IMR-90 (cell line): ENCODE measurements at regions of chr11 and their contacts with region 1.

Region 1: GRCh38 chr11:104968355-104968855 is at the start of gene CASP4:
- DNase-seq: peak; percentile 78
- ATAC-seq: peak; percentile 65
- H3K4me3 ChIP-seq: peak within 1 kb of the TSS; percentile 87
- H3K27ac ChIP-seq: peak within 1 kb of the TSS; percentile 99
- H3K4me1 ChIP-seq: peaks cover 10% of the 10 kb centered on the region; the same call in 1 of the 2 replicates
- H3K27me3 ChIP-seq: no peaks in the 10 kb centered on the region
- CTCF ChIP-seq: no peak
- POLR2A ChIP-seq: peak; percentile 51; the same call in 1 of the 2 replicates
- RAD21 ChIP-seq: no peak
- total RNA-seq, gene CASP4: 89.4 and 91.9 TPM in 2 replicates

Region 2: GRCh38 chr11:104609311-104610085 is 358.9 kb before region 1 on chr11:
- CTCF ChIA-PET with region 1: no interaction called
- POLR2A ChIA-PET with region 1: no interaction called
- dilution Hi-C with region 1: no loop called
- in situ Hi-C with region 1: no loop called
- intact Hi-C with region 1: loop called (anchors 10 kb)
- DNase-seq: peak; percentile 75
- ATAC-seq: peak; percentile 94
- H3K4me3 ChIP-seq: no peak overlapping the region
- H3K27ac ChIP-seq: no peak overlapping the region
- H3K4me1 ChIP-seq: no peaks in the 10 kb centered on the region
- H3K27me3 ChIP-seq: no peaks in the 10 kb centered on the region
- CTCF ChIP-seq: peak; percentile 70
- POLR2A ChIP-seq: no peak
- RAD21 ChIP-seq: peak; percentile 78

Region 3: DNA sequence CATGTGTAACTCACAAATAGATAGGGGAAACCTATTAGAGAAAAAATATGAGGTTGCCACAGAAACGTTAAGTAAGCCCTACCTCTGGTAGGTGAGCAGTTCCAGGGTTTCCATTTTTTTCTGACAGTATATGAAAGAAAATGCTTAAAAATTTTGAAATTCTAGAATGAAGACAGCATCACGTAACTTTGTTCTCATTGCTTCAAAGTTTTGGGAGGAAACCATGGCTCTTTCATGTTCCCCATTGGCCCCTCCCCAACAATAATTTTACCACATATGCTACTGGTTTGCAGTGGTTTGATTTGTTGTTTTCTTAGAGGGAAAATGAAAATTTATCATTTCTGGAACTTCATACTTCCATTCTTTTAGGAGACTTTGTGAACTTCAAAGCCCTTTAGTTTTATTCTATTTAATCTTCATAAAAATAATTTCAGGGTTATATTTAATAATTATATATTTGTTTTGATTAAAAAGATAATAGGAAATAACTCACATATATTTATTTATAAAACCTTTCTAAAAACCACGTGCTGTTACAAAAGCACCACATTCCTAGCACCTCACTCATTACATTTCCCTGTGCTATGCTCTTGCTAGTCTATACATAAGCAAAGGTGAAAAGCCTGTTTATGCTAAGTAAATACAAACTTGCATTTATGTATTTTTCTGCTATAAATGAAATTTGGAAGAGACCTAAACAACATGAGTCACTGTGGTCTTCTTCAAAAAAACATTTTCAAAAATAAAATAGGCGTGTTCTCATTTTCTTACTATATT is 183.5 kb before region 1 on chr11:
- CTCF ChIA-PET with region 1: no interaction called
- POLR2A ChIA-PET with region 1: no interaction called
- dilution Hi-C with region 1: no loop called
- in situ Hi-C with region 1: no loop called
- intact Hi-C with region 1: no loop called
- DNase-seq: peak; percentile 23
- ATAC-seq: no peak
- H3K4me3 ChIP-seq: no peak overlapping the region
- H3K27ac ChIP-seq: no peak overlapping the region
- H3K4me1 ChIP-seq: no peaks in the 10 kb centered on the region
- H3K27me3 ChIP-seq: no peaks in the 10 kb centered on the region
- CTCF ChIP-seq: no peak
- POLR2A ChIP-seq: no peak
- RAD21 ChIP-seq: no peak

Region 4: DNA sequence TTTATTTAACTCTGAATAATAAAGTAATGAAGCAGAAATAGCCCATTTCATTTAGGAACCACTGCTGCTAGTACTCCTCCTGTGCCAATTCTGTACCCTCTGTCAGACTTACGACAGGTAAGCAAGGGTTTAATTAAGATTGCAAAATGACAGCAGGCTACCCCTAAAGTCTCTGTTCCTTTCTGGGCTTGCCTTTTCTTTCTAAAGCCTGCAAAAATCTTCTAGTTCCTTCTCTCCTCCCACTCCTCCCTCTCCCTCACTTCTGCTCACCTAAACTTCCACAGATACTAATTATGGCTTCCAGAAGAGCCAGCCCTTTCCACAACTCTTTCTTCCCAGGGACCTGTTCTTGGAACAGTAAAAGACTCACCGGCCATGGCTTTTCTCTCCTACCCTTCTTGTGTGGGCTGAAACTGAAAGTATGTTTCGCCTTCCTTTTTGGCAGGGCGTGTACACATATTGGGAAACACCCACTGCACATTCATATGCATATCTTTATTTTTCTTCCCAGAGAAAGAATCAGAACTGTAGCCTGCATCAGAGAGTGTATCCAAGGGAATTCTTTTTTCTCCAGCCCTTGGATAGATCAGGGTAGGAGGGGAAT is 76.6 kb after region 1 on chr11 and contains the start of gene CARD16:
- CTCF ChIA-PET with region 1: no interaction called
- POLR2A ChIA-PET with region 1: no interaction called
- dilution Hi-C with region 1: no loop called
- in situ Hi-C with region 1: no loop called
- intact Hi-C with region 1: loop called (anchors 2 kb)
- DNase-seq: peak; percentile 81
- ATAC-seq: peak; percentile 37
- H3K4me3 ChIP-seq: peak within 1 kb of the TSS; percentile 82
- H3K27ac ChIP-seq: peak within 1 kb of the TSS; percentile 96
- H3K4me1 ChIP-seq: peaks cover 9% of the 10 kb centered on the region
- H3K27me3 ChIP-seq: no peaks in the 10 kb centered on the region
- CTCF ChIP-seq: no peak
- POLR2A ChIP-seq: no peak
- RAD21 ChIP-seq: no peak
- total RNA-seq, gene CARD16: 7.9 and 23.3 TPM in 2 replicates

Region 5: DNA sequence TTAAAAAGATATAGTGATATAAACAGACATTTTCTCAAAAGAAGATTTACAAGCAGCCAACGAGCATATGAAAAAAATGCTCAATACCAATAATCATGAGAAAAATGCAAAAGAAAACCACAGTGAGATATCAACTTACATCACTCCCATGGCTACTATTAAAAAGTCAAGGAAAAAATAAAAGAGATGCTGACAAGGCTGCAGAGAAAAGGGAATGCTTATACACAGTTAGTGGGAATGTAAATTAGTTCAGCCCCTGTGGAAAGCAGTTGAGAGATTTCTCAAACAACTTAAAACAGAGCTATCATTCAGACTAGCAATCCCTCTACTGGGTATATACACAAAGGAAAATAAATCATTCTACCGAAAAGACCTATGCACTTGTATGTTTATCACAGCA is 268.3 kb after region 1 on chr11:
- CTCF ChIA-PET with region 1: no interaction called
- POLR2A ChIA-PET with region 1: no interaction called
- dilution Hi-C with region 1: no loop called
- in situ Hi-C with region 1: no loop called
- intact Hi-C with region 1: loop called (anchors 2 kb)
- DNase-seq: peak; percentile 84
- ATAC-seq: peak; percentile 90
- H3K4me3 ChIP-seq: no peak overlapping the region
- H3K27ac ChIP-seq: no peak overlapping the region
- H3K4me1 ChIP-seq: peaks cover 4% of the 10 kb centered on the region; the same call in 1 of the 2 replicates
- H3K27me3 ChIP-seq: no peaks in the 10 kb centered on the region
- CTCF ChIP-seq: no peak
- POLR2A ChIP-seq: no peak
- RAD21 ChIP-seq: no peak

Region 6: GRCh38 chr11:105609832-105610781 is 641.7 kb after region 1 on chr11 and contains the start of gene GRIA4:
- CTCF ChIA-PET with region 1: no interaction called
- POLR2A ChIA-PET with region 1: no interaction called
- dilution Hi-C with region 1: no loop called
- in situ Hi-C with region 1: no loop called
- intact Hi-C with region 1: loop called (anchors 2 kb)
- DNase-seq: peak; percentile 74
- ATAC-seq: peak; percentile 89
- H3K4me3 ChIP-seq: peak within 1 kb of the TSS; percentile 53
- H3K27ac ChIP-seq: peak within 1 kb of the TSS; percentile 10; the same call in 1 of the 2 replicates
- H3K4me1 ChIP-seq: no peaks in the 10 kb centered on the region
- H3K27me3 ChIP-seq: no peaks in the 10 kb centered on the region
- CTCF ChIP-seq: no peak
- POLR2A ChIP-seq: no peak
- RAD21 ChIP-seq: 0 out of 2 replicates have a peak, but pooled peaks have one; percentile 7
- total RNA-seq, gene GRIA4: 0.36 and 0.56 TPM in 2 replicates

Region 7: GRCh38 chr11:106076919-106077608 is 1108.7 kb after region 1 on chr11 and contains the start of gene KBTBD3:
- CTCF ChIA-PET with region 1: no interaction called
- POLR2A ChIA-PET with region 1: no interaction called
- dilution Hi-C with region 1: no loop called
- in situ Hi-C with region 1: no loop called
- intact Hi-C with region 1: loop called (anchors 5 kb)
- DNase-seq: peak; percentile 99
- ATAC-seq: peak; percentile 96
- H3K4me3 ChIP-seq: peak within 1 kb of the TSS; percentile 91
- H3K27ac ChIP-seq: peak within 1 kb of the TSS; percentile 97
- H3K4me1 ChIP-seq: no peaks in the 10 kb centered on the region; the same call in 1 of the 2 replicates
- H3K27me3 ChIP-seq: no peaks in the 10 kb centered on the region
- CTCF ChIP-seq: no peak; the same call in 1 of the 2 replicates
- POLR2A ChIP-seq: no peak
- RAD21 ChIP-seq: peak; percentile 9; the same call in 1 of the 2 replicates
- total RNA-seq, gene KBTBD3: 1.6 and 2.2 TPM in 2 replicates